ENCODE measurements at regions of chr2 and their contacts with region 1.

Region 1: GRCh38 chr2:201118121-201118960 is 2.4 kb downstream of the CFLAR start:
- DNase-seq: peak; percentile 66 to 91
- ATAC-seq: peak; percentile 67 to 69
- H3K4me3 ChIP-seq: peak overlapping the region; percentile 69
- H3K27ac ChIP-seq: peak overlapping the region; percentile 90 to 99
- H3K4me1 ChIP-seq: peaks cover 56% of the 10 kb centered on the region
- CTCF ChIP-seq: peak; percentile 62
- EP300 ChIP-seq: peak in 1 of 2 experiments; percentile 19; a peak in 1 of 5 replicates
- POLR2A ChIP-seq: peak; percentile 33; the same call in 1 of the 2 replicates
- RAD21 ChIP-seq: peak; percentile 61 to 77

Region 2: DNA sequence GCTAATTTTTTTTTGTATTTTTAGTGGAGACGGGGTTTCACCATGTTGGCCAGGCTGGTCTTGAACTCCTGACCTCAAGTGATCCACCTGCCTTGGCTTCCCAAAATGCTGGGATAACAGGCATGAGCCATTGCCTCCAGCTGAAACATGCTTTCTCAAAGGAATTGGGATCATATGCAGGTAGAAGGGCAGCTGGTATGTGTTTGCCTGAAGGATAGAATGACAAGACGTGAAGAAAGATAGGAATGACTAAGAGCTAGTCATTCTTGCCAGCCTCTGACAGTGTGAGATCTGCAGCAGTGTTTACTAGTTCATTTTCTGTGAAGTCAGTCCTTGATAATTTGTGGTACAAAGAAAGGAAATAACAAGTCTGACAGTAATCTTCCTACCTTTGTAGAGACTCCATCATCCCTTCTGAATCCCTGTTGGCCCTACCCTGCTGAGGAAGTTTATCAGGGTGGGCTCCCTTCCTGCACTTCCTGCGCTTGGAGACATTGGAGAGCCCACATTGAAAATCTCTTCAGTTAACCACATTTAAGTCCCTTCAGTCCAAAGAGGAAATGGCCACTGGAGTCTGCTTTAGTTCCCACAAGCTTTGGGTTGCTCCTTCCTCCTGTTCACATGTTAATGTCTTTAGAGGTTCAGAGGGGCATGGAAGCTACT is 12.3 kb after region 1 on chr2:
- CTCF ChIA-PET with region 1: interaction called, 26 read pairs
- POLR2A ChIA-PET with region 1: interaction called, 5 read pairs
- DNase-seq: peak in 1 of 2 experiments; percentile 52
- ATAC-seq: peak; percentile 55 to 65; a peak in 5 of 6 replicates
- H3K4me3 ChIP-seq: no peak overlapping the region
- H3K27ac ChIP-seq: peak overlapping the region; percentile 86; a peak in 5 of 6 replicates
- H3K4me1 ChIP-seq: peaks cover 73% of the 10 kb centered on the region
- CTCF ChIP-seq: no peak
- EP300 ChIP-seq: no peak
- POLR2A ChIP-seq: no peak
- RAD21 ChIP-seq: no peak

Region 3: GRCh38 chr2:201151127-201151981 is 33.0 kb after region 1 on chr2:
- CTCF ChIA-PET with region 1: interaction called, 46 read pairs
- POLR2A ChIA-PET with region 1: interaction called, 39 read pairs
- DNase-seq: peak; percentile 77 to 85
- ATAC-seq: peak; percentile 62 to 69
- H3K4me3 ChIP-seq: peak overlapping the region; percentile 23; the same call in 2 of the 3 replicates
- H3K27ac ChIP-seq: peak overlapping the region; percentile 95 to 96
- H3K4me1 ChIP-seq: peaks cover 59% of the 10 kb centered on the region
- CTCF ChIP-seq: no peak
- EP300 ChIP-seq: peak; percentile 48 to 79; a peak in 3 of 5 replicates
- POLR2A ChIP-seq: no peak
- RAD21 ChIP-seq: no peak

Measured in A549 (cell line).